ENCODE measurements at regions of chr6 and their contacts with region 1.

Region 1: GRCh38 chr6:56570413-56571359 is 72.0 kb downstream of the DST start:
- DNase-seq: no peak
- H3K4me3 Mint-ChIP-seq: no peak overlapping the region
- H3K27ac Mint-ChIP-seq: no peak overlapping the region
- H3K4me1 Mint-ChIP-seq: no peaks in the 10 kb centered on the region
- H3K27me3 Mint-ChIP-seq: no peaks in the 10 kb centered on the region

Region 2: GRCh38 chr6:55040102-55040848 is 1530.4 kb before region 1 on chr6:
- CTCF ChIA-PET with region 1: no interaction called
- intact Hi-C with region 1: no loop called
- DNase-seq: no peak
- H3K4me3 Mint-ChIP-seq: no peak overlapping the region
- H3K27ac Mint-ChIP-seq: no peak overlapping the region
- H3K4me1 Mint-ChIP-seq: no peaks in the 10 kb centered on the region
- H3K27me3 Mint-ChIP-seq: no peaks in the 10 kb centered on the region

Region 3: DNA sequence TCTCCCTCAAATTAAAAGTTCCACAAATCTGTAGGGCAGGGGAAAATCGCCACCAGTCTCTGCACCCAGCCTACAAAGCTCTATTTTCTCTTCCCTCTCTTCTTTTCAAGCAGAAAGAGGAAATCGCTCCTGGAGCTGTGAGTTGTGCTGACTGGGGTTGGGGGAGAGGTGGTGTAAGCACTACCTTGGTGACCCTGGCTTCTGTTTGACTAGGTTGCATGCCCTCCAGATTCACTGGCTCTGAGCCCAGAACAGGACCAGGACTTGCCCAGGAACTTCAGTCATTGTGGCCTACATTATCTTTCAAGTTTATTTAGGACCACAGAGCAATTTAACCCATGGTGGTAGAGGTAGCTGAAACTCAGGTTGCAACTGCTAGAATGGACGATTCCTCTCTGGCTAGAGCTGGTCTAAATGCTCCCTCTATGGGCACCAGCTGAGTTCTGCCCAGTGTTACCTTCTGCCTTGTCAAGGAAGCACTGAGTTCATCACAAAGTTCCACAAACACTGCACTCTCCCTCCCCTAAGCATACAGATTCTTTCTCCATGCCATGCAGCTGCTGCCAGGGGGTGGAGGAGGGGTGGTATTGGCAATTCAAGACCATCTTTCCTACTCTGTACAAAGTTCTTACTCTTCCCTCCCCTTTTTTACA is 573.3 kb before region 1 on chr6:
- CTCF ChIA-PET with region 1: no interaction called
- intact Hi-C with region 1: no loop called
- DNase-seq: no peak
- H3K4me3 Mint-ChIP-seq: no peak overlapping the region
- H3K27ac Mint-ChIP-seq: no peak overlapping the region
- H3K4me1 Mint-ChIP-seq: no peaks in the 10 kb centered on the region
- H3K27me3 Mint-ChIP-seq: no peaks in the 10 kb centered on the region

Region 4: DNA sequence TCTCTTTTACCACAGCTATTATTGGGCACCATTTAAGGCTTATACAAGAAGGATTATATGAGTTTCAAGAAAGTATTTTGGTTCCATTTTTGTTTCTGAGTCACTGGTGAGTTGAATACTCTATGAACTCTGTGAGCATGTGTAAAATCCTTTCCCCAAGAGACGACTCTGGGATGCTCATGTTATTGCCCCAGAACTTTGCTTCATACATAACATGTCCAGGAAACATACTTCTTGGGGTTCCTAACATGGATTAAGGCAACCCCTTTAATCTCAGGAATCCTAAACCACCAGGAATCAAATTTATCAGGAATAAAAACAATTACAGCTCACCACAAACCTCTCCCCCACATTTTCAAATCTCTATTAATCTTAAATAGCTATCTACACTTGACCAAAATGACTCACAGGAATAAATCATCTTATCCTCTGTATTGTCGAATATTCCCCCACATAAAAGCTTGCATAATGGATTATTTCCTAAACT is 205.8 kb before region 1 on chr6:
- CTCF ChIA-PET with region 1: interaction called, 12 read pairs
- intact Hi-C with region 1: no loop called
- DNase-seq: no peak
- H3K4me3 Mint-ChIP-seq: no peak overlapping the region
- H3K27ac Mint-ChIP-seq: no peak overlapping the region
- H3K4me1 Mint-ChIP-seq: peaks cover 3% of the 10 kb centered on the region
- H3K27me3 Mint-ChIP-seq: peaks cover 4% of the 10 kb centered on the region

Region 5: GRCh38 chr6:56581296-56581925 is 10.7 kb after region 1 on chr6:
- CTCF ChIA-PET with region 1: interaction called, 23 read pairs
- intact Hi-C with region 1: no loop called
- DNase-seq: no peak
- H3K4me3 Mint-ChIP-seq: no peak overlapping the region
- H3K27ac Mint-ChIP-seq: no peak overlapping the region
- H3K4me1 Mint-ChIP-seq: no peaks in the 10 kb centered on the region
- H3K27me3 Mint-ChIP-seq: no peaks in the 10 kb centered on the region

Measured in activated naive CD4-positive, alpha-beta T cell treated with anti-CD3 and anti-CD28 coated beads for 36 hours (primary cell).